ENCODE measurements at regions of chr14 and their contacts with region 1.

Region 1: DNA sequence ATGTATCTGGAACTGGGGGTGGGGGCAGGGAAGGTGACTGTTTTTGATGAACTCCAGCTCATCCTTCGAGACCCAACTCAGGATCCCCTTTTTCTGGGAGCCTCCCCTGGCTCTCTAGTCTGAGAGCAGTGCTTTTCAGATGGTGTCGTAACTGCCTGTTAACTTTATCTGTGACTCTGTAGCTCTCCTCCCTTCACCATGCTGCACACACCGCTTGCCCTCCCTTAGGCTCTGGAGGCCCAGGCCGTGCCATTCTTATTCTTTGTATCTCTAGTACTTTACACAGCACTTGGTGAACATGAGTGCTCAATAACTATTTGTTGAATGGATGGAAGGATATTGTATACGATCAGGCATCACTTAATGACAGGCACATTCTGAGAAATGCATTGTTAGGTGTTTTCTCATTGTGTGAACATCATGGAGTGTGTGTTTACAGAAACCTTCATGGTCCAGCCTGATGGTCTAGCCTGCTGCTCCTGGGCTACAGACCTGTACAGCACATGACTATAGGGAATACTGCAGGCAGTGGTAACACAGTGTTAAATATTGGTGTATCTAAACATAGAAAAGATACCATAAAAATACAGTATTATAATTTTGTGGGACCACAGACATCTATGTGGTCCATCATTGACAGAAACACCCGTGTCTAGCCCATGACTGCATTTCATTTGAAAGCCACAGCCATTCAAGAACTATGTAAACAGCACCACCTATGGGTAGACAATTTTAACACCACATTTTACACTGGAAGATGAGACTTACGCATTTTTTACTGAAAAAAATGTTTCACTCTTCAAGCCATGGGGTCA is 91.8 kb downstream of the EML1 start:
- DNase-seq: no peak
- ATAC-seq: peak; percentile 81 to 82

Region 2: GRCh38 chr14:99683619-99684355 is 201.3 kb before region 1 on chr14 and contains the start of gene CYP46A1:
- intact Hi-C with region 1: loop called (anchors 2 to 5 kb)
- DNase-seq: peak; percentile 100
- ATAC-seq: peak; percentile 97
- total RNA-seq, gene CYP46A1: 4.1 to 4.7 TPM

Region 3: GRCh38 chr14:99729991-99730868 is 154.8 kb before region 1 on chr14:
- intact Hi-C with region 1: loop called (anchors 2 to 5 kb)
- DNase-seq: peak; percentile 74
- ATAC-seq: peak; percentile 64 to 80

Region 4: DNA sequence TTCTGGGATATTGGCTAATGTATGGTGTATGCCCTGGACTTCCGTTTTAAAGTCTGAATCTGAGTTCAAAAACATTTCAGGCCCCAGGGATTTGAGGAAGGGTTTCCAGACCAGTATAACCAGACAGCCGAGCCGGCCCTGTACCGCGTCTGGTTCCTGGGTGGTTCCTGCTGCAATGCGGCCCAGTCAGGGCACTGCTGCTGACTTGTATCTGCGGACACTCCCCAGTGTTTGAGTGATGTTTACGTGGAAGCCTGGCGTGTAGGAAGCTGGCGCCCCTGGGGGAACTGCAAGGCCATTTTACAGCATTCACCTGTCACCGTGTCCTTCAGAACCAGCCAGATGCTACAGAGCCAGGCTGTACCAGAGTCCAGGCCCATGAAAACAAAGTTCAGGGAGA is 75.2 kb before region 1 on chr14:
- intact Hi-C with region 1: loop called in 1 of 2 experiments (anchors 5 kb)
- DNase-seq: peak; percentile 37
- ATAC-seq: peak; percentile 59 to 74

Region 5: GRCh38 chr14:99925471-99925870 is 40.4 kb after region 1 on chr14:
- intact Hi-C with region 1: no loop called
- DNase-seq: no peak
- ATAC-seq: no peak

Region 6: DNA sequence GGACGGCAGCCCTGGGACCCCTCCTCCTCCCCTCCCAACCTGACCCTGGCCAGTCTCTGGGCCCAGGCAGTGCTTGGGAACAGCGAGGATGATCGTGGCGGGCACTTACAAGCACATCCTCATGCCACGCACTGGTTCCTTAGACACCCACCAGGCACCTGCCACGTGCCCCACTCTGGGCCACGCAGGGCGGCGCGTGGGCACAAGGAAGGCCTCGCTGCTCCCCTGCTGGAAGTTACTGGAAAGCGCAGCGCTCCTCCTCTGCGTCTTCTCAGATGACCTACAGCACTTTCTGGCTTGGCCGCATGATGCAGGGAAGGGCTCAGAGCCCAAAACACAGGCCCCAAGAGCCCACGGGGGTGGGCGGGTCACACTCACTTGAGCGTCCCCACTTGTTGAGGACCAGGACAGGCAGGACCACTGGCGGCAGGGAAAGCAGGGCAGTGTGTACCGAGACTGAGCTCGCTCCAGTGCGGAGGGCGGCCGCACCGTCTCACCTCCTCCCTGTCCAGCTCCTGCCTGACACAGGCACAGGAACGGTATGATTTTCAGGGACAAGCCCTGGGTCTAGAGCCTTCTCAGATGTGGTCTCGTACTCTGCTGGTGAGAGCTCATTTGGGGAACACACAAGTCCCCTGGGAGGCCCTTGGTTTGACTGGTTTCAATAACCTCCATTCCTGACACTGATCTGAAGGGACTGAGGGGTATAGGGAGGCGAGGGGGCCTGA is 51.9 kb after region 1 on chr14:
- intact Hi-C with region 1: no loop called
- DNase-seq: no peak
- ATAC-seq: no peak